BJ (cell line): ENCODE measurements at regions of chr4 and their contacts with region 1.

Region 1: DNA sequence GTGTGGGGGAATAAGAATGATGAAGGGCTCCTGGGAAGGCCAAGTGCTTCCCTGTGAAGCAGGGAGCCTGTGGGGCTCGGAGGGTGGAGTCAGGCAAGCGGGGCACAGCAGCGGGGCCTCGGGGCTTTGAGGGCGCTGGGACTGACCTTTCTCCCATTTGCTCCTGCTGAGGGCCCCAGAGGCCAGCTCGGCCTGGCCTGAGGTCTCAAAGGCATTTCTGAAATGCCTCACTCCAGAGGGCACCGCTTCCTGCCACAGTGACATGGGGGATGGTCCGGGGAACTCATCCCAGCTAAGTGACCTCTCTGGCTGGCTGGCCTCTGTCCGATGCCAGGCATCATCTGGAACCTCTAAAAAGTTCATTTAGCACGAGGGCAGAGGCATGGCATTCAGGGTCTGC is 98.8 kb upstream of the STX18 start:
- DNase-seq: no peak
- H3K4me3 ChIP-seq: no peak overlapping the region
- H3K27me3 ChIP-seq: no peaks in the 10 kb centered on the region
- CTCF ChIP-seq: no peak

Region 2: GRCh38 chr4:4761128-4761982 is 120.7 kb after region 1 on chr4:
- CTCF ChIA-PET with region 1: no interaction called
- POLR2A ChIA-PET with region 1: interaction called, 10 read pairs
- DNase-seq: no peak
- H3K4me3 ChIP-seq: no peak overlapping the region
- H3K27me3 ChIP-seq: peaks cover 10% of the 10 kb centered on the region
- CTCF ChIP-seq: peak; percentile 27